ENCODE measurements at regions of chr7 and their contacts with region 1.

Region 1: DNA sequence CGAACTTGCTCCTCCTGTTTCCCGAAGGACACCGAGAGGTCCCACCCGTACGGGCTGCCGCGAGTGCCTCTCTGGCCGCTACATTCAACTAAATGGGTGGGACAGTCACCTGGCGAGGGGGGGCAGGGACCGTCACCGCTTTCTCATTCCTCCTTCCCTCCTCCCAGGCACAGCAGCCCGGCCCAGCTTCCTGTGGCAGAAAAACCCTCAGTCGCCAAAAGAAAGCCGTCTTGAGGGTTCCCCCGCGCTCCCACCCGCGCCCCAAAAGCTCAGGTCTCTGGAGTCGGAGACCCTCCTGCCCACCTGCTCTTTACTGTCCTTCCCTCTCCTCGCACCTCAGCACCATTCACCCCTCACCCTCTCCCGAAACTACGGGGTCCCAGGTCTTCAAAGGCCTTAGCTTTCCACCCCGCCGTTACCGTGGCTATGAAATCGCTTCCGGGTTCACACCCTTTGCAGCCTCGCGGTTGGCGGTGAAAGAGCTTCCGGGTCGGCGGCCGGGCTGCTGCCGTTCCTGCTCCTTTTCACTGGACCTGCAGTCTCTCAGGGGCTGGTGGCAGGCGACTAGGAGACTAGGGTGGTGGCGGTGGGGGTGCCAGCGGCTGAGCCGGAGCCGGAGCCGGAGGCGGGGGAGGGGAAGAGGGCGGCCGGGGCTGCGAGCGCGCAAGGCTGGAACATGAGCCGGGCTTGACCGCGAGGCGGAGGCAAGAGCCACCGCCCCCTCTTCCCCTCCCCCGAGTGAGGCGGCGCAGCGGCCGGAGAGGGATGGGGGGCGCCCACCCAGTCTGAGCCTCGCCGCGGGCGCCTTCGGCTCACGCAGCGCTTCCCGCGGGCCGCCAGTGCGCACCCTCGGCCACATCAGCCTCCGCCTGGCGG is at the starts of genes ANKIB1 and KRIT1:
- DNase-seq: peak; percentile 91
- H3K4me3 Mint-ChIP-seq: peak within 1 kb of the TSS; percentile 92
- H3K27ac Mint-ChIP-seq: peak within 1 kb of the TSS; percentile 95
- H3K4me1 Mint-ChIP-seq: peaks cover 33% of the 10 kb centered on the region
- H3K27me3 Mint-ChIP-seq: no peaks in the 10 kb centered on the region
- total RNA-seq, gene ANKIB1: 37.9 to 38.4 TPM
- total RNA-seq, gene KRIT1: 21.5 to 27.9 TPM

Region 2: DNA sequence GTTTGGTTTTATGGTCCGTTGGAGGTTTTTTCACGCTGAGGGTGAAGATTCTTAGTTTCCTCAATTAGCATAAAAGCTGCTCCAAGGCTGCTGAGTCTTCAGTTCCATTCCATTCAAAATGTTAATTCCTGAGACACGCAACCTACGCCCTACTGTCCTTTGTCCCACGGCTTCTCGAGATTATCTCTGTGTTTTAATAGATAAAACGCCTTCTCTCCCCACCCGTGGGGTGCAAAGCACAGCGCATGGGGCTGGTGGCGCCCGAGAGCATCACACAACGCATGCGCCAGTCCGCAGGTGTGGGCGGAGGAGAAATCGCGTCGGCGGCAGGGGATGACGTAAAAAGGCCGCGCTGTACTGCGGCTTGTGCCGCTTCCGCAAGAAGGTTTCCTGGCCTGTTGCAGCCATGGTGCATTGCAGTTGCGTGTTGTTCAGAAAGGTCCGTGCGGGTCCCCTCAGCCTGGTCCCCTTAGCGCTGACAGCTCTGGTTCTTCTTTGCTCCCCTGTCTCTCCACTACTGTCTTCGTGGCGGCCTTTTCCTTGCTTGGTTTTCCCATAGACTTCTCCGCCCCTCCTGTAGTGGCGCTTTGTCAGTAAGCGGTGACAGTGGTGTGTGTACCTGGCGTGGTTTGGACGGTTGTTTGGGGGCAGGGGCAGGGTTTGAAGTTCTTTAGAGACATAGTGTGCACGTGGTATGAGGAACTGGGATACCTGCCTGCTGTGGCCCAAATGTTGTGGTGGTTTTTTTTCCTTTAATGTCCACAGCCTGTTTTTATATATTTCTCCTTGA is 1899.2 kb before region 1 on chr7 and contains the start of gene GTPBP10:
- CTCF ChIA-PET with region 1: no interaction called
- intact Hi-C with region 1: loop called (anchors 2 kb)
- DNase-seq: peak; percentile 96
- H3K4me3 Mint-ChIP-seq: peak within 1 kb of the TSS; percentile 94
- H3K27ac Mint-ChIP-seq: peak within 1 kb of the TSS; percentile 96
- H3K4me1 Mint-ChIP-seq: peaks cover 34% of the 10 kb centered on the region
- H3K27me3 Mint-ChIP-seq: no peaks in the 10 kb centered on the region
- total RNA-seq, gene GTPBP10: 35.8 to 39.3 TPM

Region 3: GRCh38 chr7:91082852-91083495 is 1162.8 kb before region 1 on chr7:
- CTCF ChIA-PET with region 1: no interaction called
- intact Hi-C with region 1: loop called (anchors 5 kb)
- DNase-seq: no peak
- H3K4me3 Mint-ChIP-seq: peak overlapping the region; percentile 13
- H3K27ac Mint-ChIP-seq: no peak overlapping the region
- H3K4me1 Mint-ChIP-seq: peaks cover 36% of the 10 kb centered on the region
- H3K27me3 Mint-ChIP-seq: no peaks in the 10 kb centered on the region

Region 4: GRCh38 chr7:92178927-92179924 is 66.5 kb before region 1 on chr7 and contains the start of gene LRRD1:
- CTCF ChIA-PET with region 1: interaction called, 4 read pairs
- intact Hi-C with region 1: loop called (anchors 2 kb)
- DNase-seq: peak; percentile 94
- H3K4me3 Mint-ChIP-seq: peak within 1 kb of the TSS; percentile 72
- H3K27ac Mint-ChIP-seq: no peak within 1 kb of the TSS
- H3K4me1 Mint-ChIP-seq: peaks cover 10% of the 10 kb centered on the region
- H3K27me3 Mint-ChIP-seq: peaks cover 3% of the 10 kb centered on the region
- total RNA-seq, gene LRRD1: not detected

Region 5: DNA sequence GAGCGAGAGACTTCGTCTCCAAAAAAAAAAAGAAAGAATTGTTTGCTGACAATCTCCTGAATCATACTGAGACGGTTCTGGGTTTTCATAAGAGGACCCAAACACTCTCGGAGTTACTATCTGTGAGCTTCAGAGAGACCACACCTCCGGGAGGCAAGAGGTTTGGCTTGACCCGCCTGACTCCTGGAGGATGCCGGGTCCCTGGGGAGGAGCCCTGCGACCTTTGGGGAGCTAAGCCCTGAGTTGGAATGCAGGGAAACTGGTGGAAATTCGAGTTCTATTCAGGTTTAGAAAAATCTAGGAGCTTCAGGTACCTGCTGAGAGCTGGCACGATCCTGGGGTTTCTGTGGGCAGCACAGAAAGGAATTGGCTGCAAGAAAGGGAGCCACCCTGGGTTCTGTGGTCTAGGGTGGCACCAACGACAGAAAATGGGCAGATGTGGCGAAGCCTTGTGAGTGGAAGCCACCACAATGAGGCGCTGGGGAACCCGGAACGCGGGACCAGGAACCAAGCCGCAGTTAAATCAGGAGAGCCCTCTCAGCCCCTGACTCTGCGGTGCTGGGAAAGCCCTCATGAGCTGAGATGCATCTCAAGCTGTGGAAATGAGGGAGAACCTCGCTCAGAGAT is 179.7 kb after region 1 on chr7:
- CTCF ChIA-PET with region 1: no interaction called
- intact Hi-C with region 1: loop called (anchors 2 kb)
- DNase-seq: peak; percentile 20
- H3K4me3 Mint-ChIP-seq: peak overlapping the region; percentile 19
- H3K27ac Mint-ChIP-seq: no peak overlapping the region
- H3K4me1 Mint-ChIP-seq: peaks cover 11% of the 10 kb centered on the region
- H3K27me3 Mint-ChIP-seq: peaks cover 14% of the 10 kb centered on the region

Region 6: DNA sequence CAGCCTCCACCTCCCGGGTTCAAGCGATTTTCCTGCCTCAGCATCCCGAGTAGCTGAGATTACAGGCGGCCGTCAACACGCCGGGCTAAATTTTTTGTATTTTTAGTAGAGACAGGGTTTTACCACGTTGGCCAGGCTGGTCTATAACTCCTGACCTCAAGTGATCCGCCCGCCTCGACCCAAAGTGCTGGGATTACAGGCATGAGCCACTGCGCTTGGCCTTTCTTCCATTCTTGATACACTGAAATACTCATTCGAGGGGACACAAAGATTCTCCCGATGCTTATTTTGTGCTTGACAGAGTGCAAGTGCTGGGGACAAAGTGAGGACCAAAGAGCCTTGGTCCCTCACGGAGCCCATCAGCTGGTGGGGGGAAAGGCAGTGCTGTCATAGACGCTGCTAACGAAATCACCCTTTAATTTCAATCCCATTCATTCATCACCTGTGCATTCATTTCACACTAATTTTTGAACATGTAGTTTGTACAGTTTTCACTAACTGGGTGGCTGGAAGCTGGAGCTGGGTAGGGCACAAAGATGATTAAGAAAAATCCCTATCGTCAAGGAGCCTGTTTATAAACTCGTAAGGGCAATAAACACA is 345.1 kb after region 1 on chr7:
- CTCF ChIA-PET with region 1: no interaction called
- intact Hi-C with region 1: loop called (anchors 2 kb)
- DNase-seq: no peak
- H3K4me3 Mint-ChIP-seq: peak overlapping the region; percentile 86
- H3K27ac Mint-ChIP-seq: no peak overlapping the region
- H3K4me1 Mint-ChIP-seq: peaks cover 39% of the 10 kb centered on the region
- H3K27me3 Mint-ChIP-seq: peaks cover 3% of the 10 kb centered on the region

Measured in activated naive CD4-positive, alpha-beta T cell treated with anti-CD3 and anti-CD28 coated beads for 36 hours (primary cell).